Prostate gland (tissue), 2 donors: ENCODE measurements at regions of chr1 and their contacts with region 1.

Region 1: DNA sequence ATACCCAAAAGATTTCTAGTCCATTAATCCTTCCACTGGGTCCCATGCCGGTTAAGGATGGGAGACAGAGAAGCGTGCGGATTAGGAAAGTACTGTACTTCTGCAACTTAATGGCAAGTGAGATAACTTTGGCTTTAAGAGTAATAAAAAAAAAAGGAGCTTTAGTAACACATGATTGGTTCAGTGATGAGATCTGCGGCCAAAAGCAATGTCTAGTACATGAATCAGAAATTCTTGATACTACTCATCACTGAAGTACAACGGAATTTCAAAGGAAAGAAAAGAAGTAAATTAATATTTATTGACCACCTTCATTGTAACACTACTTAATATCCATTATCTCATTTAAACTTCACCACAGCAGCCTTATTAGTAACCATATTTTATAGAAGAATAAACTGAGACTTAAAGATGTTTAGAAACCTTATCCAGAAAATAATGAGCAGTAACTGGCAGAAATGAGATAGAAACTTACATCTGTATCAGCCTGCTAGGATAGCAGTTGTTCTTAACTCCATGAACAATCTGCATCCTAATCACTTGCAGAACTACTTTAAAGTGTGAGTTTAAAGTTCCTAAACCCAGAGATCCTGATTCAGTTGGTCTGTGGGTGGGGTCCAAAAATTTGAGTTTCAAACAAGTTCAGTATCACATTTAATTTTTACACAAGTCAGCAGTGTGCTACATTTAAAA is 14.1 kb upstream of the NUF2 start:
- DNase-seq: no peak
- H3K4me3 ChIP-seq: no peak overlapping the region
- H3K27ac ChIP-seq: no peak overlapping the region
- H3K4me1 ChIP-seq: no peaks in the 10 kb centered on the region
- H3K27me3 ChIP-seq: no peaks in the 10 kb centered on the region
- CTCF ChIP-seq: no peak
- POLR2A ChIP-seq: no peak

Region 2: GRCh38 chr1:162357681-162358266 is 949.9 kb before region 1 on chr1:
- intact Hi-C with region 1: loop called (anchors 10 kb)
- DNase-seq: no peak
- H3K4me3 ChIP-seq: no peak overlapping the region
- H3K27ac ChIP-seq: no peak overlapping the region
- H3K4me1 ChIP-seq: no peaks in the 10 kb centered on the region
- H3K27me3 ChIP-seq: no peaks in the 10 kb centered on the region
- CTCF ChIP-seq: peak in 1 of 4 experiments; percentile 43
- POLR2A ChIP-seq: no peak

Region 3: DNA sequence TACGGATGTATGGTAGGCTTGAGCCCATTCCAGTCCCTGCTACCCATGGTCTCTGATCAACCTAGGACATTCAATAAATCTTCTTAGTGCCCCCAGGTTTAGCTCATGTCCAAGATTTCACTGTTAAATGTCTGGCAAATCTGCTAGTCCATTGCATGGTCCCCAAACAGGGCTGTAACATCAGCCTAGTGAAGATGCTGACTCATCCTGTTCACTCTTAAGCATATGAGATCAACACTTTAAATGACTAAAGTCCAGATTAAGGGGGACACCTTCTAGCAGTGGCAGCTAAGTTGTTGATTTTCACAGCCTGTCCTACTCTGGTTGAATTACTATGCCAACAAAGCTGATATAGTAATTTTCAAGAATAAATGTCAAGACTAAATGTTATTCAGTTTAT is 32.4 kb before region 1 on chr1:
- intact Hi-C with region 1: no loop called
- DNase-seq: no peak
- H3K4me3 ChIP-seq: no peak overlapping the region
- H3K27ac ChIP-seq: no peak overlapping the region
- H3K4me1 ChIP-seq: no peaks in the 10 kb centered on the region
- H3K27me3 ChIP-seq: no peaks in the 10 kb centered on the region
- CTCF ChIP-seq: no peak
- POLR2A ChIP-seq: no peak

Region 4: DNA sequence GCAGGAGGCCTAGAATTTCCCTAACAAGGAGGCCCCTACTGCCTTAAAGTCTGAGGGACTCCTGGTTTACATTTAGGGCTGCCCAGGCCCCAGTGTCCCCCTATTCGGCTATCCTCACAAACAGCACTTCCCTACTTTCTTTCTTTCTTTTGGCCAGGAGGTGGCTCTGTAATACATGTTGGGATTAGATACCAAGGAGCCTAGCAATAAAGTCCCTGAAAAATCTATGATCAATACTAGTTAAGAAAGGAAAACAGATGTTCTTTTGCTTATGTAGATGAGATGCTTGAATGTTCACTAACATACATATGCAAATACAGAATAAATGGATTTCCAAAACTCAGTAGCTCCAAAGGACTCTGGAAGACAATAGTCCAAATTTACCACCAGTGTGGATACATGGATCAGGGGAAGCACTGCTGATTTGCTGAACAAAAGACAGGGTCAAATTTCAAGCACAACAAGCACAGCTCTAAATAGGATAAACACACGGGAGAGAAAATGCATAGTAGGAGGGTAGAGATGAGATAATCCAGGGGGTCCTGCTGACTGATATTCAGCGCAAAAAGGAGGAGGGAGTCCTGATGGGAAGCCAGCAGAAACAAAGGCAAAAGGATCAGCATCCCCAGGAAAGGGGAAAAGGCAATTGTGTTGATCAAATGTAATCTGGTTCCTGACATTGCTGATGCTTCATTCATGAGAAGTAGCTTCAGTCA is 254.1 kb after region 1 on chr1:
- intact Hi-C with region 1: no loop called
- DNase-seq: no peak
- H3K4me3 ChIP-seq: no peak overlapping the region
- H3K27ac ChIP-seq: no peak overlapping the region
- H3K4me1 ChIP-seq: no peaks in the 10 kb centered on the region
- H3K27me3 ChIP-seq: no peaks in the 10 kb centered on the region
- CTCF ChIP-seq: peak; percentile 10 to 56 (median 39)
- POLR2A ChIP-seq: no peak